Activated CD4-positive, alpha-beta T cell treated with anti-CD3 and anti-CD28 coated beads, Interleukin-2, amount 10 ng/mL, durations not matched to agents 7 days and 5 days (primary cell): ENCODE measurements at regions of chr20 and their contacts with region 1.

Region 1: DNA sequence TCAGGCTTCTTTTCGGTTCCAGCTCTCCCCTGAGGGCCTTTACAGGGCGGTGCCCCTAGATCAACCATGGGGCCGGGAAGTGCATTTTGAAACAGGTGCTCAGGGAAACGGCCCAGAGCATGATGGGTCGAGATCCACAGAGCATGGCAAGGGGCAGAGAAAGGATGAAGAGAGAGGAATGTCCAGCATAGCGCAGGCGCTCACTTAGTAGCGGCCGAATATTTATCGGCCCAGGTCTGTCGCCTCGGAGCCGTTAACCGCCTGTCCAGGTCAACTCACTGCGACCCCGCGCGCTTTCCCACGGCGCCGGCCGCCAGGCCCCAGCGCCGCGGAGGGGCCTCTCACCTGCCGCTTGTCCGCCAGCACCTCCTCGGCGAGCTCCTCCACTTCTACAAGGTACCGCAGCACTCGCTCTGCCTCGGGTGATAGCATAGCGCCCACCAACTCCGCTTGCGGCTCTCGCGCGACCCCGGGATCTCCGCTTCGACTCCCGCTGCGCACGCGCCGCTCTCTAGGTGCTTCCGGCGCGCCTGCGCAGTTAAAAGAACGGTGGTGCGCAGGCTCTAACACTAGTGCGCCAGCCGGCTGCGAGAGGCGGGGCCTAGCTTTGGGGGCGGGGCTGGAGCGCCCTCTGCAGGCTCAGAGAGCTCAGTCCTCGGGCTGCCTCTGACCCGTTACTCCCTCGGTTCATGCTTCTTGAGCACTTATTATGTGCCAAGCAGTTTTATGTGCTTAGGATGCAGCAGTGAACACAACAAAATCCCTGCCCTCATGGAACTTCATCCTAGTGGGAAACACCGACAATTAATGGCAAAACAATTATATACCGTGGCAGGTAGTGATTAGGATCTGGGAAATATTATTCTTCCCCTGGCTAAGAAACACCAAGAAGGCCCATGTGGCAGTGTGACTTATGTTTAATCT is at the start of gene PDRG1:
- DNase-seq: peak; percentile 96
- H3K4me3 Mint-ChIP-seq: peak within 1 kb of the TSS; percentile 90
- H3K27ac Mint-ChIP-seq: peak within 1 kb of the TSS; percentile 94
- H3K4me1 Mint-ChIP-seq: peaks cover 30% of the 10 kb centered on the region
- H3K27me3 Mint-ChIP-seq: peaks cover 8% of the 10 kb centered on the region
- total RNA-seq, gene PDRG1: 12.9 to 13.9 TPM

Region 2: DNA sequence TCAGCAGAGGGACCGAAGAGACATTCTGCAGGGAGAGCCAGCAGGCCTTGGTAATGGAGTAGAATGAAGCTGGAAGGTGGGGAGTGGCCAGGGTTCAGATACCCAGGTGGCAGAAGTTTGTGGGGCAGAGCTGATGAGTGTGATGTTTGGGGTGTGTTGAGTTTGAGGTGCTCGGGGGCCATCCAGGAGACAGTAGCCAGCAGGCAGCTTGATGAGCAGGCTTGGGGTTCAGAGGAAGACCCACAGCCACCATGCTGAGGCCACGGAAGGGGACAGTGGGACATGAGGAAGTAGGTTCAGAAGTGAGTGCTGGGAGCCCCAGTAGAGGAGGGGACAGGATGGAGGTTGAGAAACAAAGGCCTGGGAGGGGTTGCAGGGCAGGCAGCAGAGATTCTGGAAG is 95.3 kb before region 1 on chr20:
- CTCF ChIA-PET with region 1: interaction called, 11 read pairs
- POLR2A ChIA-PET with region 1: no interaction called
- DNase-seq: no peak
- H3K4me3 Mint-ChIP-seq: no peak overlapping the region
- H3K27ac Mint-ChIP-seq: no peak overlapping the region
- H3K4me1 Mint-ChIP-seq: peaks cover 12% of the 10 kb centered on the region
- H3K27me3 Mint-ChIP-seq: peaks cover 22% of the 10 kb centered on the region

Region 3: GRCh38 chr20:31879143-31879987 is 72.4 kb before region 1 on chr20:
- CTCF ChIA-PET with region 1: interaction called, 10 read pairs
- POLR2A ChIA-PET with region 1: interaction called, 4 read pairs
- DNase-seq: peak; percentile 86
- H3K4me3 Mint-ChIP-seq: peak overlapping the region; percentile 87
- H3K27ac Mint-ChIP-seq: peak overlapping the region; percentile 65
- H3K4me1 Mint-ChIP-seq: peaks cover 17% of the 10 kb centered on the region
- H3K27me3 Mint-ChIP-seq: peaks cover 45% of the 10 kb centered on the region

Region 4: DNA sequence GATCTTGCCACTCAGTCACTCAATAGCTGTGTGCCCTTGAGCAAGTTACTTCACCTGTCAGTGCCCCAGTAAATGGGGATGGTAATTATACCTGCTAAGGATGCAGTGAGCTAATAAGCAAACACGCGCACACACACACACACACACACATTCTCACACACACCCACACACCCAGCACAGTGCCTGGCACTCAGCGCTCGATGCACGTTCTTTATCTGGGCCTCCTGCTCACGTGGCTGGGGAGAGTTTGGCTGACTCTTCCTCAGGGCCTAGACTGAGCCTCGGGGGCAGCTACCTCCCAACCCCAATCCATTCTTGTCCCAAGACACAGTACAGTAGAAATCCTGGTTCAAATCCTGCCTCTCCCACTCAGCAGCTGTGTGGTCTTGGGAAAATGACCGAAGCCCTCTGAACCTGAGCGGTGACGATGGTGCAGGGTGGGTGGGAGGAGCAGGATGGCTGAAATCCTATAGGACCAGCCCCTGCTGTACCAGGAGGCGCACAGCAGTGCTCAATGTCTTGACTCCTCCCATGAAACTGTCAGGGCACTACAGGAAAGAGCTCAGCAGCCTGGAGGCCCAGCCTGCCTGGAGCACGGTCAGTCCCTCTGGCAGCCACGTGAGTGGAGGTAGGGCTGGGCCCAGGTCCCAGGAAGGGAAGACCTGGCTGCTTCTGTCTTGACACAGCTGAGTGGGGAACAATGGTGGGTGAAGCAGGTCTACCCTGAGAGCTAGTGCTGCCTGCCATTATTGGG is 31.5 kb before region 1 on chr20:
- CTCF ChIA-PET with region 1: no interaction called
- POLR2A ChIA-PET with region 1: no interaction called
- DNase-seq: no peak
- H3K4me3 Mint-ChIP-seq: no peak overlapping the region
- H3K27ac Mint-ChIP-seq: no peak overlapping the region
- H3K4me1 Mint-ChIP-seq: peaks cover 4% of the 10 kb centered on the region
- H3K27me3 Mint-ChIP-seq: peaks cover 19% of the 10 kb centered on the region

Region 5: DNA sequence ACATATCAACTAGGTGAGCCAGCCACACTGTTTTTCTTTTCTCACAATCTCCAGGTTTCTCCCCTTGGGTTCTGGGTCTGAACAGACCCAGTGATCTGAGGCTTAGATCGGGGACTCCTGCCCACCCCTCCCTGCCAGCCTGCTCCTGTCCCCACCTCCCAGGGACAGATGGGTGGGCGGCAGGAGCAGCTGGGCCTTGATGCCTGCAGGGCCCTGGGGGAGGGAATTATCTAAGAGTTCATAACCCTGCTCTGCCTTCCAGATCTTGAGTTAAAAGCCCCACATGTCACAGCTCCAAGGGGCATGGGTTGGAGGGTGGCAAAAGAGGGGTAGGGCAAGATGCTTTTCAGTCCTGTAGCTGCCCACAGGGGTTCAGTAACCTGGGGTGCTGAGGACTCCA is 11.0 kb after region 1 on chr20:
- CTCF ChIA-PET with region 1: interaction called, 13 read pairs
- POLR2A ChIA-PET with region 1: no interaction called
- DNase-seq: no peak
- H3K4me3 Mint-ChIP-seq: no peak overlapping the region
- H3K27ac Mint-ChIP-seq: no peak overlapping the region
- H3K4me1 Mint-ChIP-seq: peaks cover 3% of the 10 kb centered on the region
- H3K27me3 Mint-ChIP-seq: peaks cover 32% of the 10 kb centered on the region